A549 (cell line): ENCODE measurements at regions of chr9 and their contacts with region 1.

Region 1: DNA sequence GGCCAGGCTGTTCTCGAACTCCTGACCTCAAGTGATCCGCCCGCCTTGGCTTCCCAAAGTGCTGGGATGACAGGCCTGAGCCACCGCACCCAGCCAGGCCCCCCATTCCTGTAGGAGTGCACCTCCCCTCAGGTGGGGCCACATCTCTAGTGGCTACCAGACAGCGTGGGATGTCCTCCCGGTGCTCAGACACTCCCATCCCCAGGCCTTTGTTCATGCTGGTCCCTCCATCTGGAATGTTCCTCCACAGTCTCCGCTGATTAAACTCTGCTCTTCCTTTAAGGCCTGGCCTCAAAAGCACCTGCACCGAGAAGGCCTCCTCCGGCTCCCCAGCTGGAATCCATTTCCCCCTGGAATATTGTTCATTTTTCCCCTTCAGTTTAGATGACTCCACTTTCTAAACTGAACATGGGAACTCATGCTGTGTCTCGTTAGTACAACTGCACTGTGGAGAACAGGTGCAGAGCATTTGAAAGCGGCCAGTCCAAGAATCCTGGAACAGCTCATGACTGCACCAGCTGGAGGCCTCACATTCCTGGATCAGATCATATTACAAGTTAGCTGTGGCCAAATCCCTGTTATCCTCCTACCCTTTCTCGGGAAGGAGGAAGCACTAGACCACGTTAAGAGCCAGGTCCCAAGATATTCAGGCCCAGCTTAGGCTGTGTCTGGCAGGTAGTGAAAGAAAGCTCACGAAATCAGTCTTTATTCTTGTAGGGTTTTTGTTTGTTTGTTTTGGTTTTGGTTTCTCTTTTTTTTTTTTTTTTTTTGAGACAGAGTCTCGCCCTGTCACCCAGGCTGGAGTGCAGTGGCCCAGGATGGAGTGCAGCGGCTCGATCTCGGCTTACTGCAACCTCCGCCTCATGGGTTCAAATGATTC is 10.8 kb upstream of the PRRC2B start:
- DNase-seq: peak; percentile 69 to 72
- ATAC-seq: peak; percentile 93 to 94
- H3K4me3 ChIP-seq: no peak overlapping the region
- H3K27ac ChIP-seq: peak overlapping the region; percentile 39 to 75
- H3K4me1 ChIP-seq: peaks cover 14% of the 10 kb centered on the region
- CTCF ChIP-seq: no peak
- EP300 ChIP-seq: no peak
- POLR2A ChIP-seq: no peak
- RAD21 ChIP-seq: no peak

Region 2: DNA sequence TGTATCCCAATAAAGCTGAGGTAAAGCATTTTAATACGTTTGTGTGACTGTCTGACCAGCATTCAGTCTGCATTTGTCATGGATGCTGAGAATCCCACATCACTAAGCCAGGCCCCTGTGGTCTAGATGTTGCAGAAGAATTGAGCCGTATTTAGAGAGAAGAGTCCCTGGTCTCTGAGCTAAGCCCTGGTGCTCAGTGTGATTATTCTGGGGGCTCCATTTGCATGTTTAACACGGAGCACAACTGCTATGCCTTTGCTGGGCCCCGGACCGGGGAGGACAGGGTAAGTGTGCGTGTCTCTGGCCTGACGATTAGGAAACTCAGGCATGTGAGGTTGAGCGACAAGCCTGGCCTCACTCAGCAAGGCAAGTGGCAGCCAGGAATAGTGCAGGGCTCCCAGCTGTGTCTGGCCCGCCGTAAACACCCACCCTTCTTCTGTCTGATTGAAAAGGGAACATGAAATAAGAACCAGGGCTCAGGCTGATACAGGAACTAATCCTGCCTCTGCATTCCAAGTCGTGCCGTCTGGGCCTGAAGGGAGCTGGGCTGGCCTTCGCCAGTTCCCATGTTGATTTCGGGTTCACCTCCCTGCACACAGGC is 129.1 kb before region 1 on chr9:
- CTCF ChIA-PET with region 1: no interaction called
- POLR2A ChIA-PET with region 1: no interaction called
- DNase-seq: no peak
- ATAC-seq: no peak; a peak in 2 of 6 replicates
- H3K4me3 ChIP-seq: no peak overlapping the region
- H3K27ac ChIP-seq: no peak overlapping the region
- H3K4me1 ChIP-seq: peaks cover 8% of the 10 kb centered on the region
- CTCF ChIP-seq: no peak
- EP300 ChIP-seq: no peak
- POLR2A ChIP-seq: no peak
- RAD21 ChIP-seq: no peak

Region 3: GRCh38 chr9:131393622-131394463 is 10.8 kb after region 1 on chr9 and contains the start of gene PRRC2B:
- CTCF ChIA-PET with region 1: interaction called, 12 read pairs
- POLR2A ChIA-PET with region 1: no interaction called
- DNase-seq: peak; percentile 86 to 88
- ATAC-seq: peak; percentile 80 to 89
- H3K4me3 ChIP-seq: peak within 1 kb of the TSS; percentile 61
- H3K27ac ChIP-seq: peak within 1 kb of the TSS; percentile 85 to 99
- H3K4me1 ChIP-seq: peaks cover 45% of the 10 kb centered on the region
- CTCF ChIP-seq: peak; percentile 90
- EP300 ChIP-seq: no peak; a peak in 2 of 5 replicates
- POLR2A ChIP-seq: peak; percentile 90
- RAD21 ChIP-seq: peak; percentile 18 to 70; a peak in 3 of 5 replicates
- polyA plus RNA-seq, gene PRRC2B: 35.6 and 57.0 TPM in 2 replicates